Activated CD4-positive, alpha-beta T cell treated with anti-CD3 and anti-CD28 coated beads for 36 hours (primary cell): ENCODE measurements at regions of chr6 and their contacts with region 1.

Region 1: DNA sequence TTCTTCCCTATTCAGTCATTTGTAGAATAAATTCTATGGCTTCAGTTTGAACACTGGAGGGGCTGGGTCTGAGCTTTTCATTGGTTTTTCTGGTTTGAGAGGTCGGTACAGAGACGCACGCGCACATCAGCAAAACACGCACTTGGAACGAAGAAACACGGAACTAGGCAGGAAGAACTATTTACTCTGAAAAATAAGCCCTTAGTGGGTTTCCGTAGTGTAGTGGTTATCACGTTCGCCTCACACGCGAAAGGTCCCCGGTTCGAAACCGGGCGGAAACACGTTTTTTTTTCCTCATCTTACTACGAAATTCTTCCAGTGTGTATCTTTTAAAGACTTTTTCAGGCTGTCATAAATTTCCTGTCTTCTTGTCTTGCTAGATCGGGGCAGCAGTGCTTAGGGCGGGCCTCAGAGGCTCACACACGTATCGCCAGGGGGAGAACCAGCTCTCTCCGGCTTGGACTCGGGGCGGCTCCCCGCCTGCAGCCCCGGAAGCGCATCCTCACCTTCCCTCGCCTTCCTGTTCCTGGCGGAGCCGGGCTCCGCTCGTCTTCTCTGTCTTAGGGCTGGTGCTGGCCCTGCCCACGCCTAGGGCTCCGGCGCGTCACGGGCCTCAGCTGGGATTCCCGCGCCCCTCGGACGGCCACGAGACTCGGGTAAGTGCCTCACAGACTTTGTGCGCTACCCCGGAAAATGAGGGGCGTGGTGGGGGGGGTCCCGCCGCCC is at the start of gene HMGN4:
- DNase-seq: peak; percentile 89
- ATAC-seq: peak; percentile 63
- H3K4me3 Mint-ChIP-seq: peak within 1 kb of the TSS; percentile 89
- H3K27ac Mint-ChIP-seq: peak within 1 kb of the TSS; percentile 99
- H3K4me1 Mint-ChIP-seq: peaks cover 57% of the 10 kb centered on the region
- H3K27me3 Mint-ChIP-seq: no peaks in the 10 kb centered on the region
- total RNA-seq, gene HMGN4: 63.6 to 86.4 TPM

Region 2: GRCh38 chr6:26097268-26097875 is 440.6 kb before region 1 on chr6:
- CTCF ChIA-PET with region 1: no interaction called
- POLR2A ChIA-PET with region 1: no interaction called
- intact Hi-C with region 1: no loop called
- DNase-seq: peak; percentile 74
- ATAC-seq: peak; percentile 88
- H3K4me3 Mint-ChIP-seq: no peak overlapping the region
- H3K27ac Mint-ChIP-seq: no peak overlapping the region
- H3K4me1 Mint-ChIP-seq: peaks cover 2% of the 10 kb centered on the region
- H3K27me3 Mint-ChIP-seq: no peaks in the 10 kb centered on the region

Region 3: GRCh38 chr6:26322645-26323482 is 215.1 kb before region 1 on chr6:
- CTCF ChIA-PET with region 1: interaction called, 4 read pairs
- POLR2A ChIA-PET with region 1: interaction called, 3 read pairs
- intact Hi-C with region 1: loop called in 1 of 2 experiments (anchors 1 kb)
- DNase-seq: peak; percentile 77
- ATAC-seq: peak; percentile 66
- H3K4me3 Mint-ChIP-seq: peak overlapping the region; percentile 84
- H3K27ac Mint-ChIP-seq: peak overlapping the region; percentile 93
- H3K4me1 Mint-ChIP-seq: peaks cover 28% of the 10 kb centered on the region
- H3K27me3 Mint-ChIP-seq: peaks cover 5% of the 10 kb centered on the region

Region 4: GRCh38 chr6:26366504-26366903 is 171.5 kb before region 1 on chr6:
- CTCF ChIA-PET with region 1: no interaction called
- POLR2A ChIA-PET with region 1: no interaction called
- intact Hi-C with region 1: loop called in 1 of 2 experiments (anchors 1 kb)
- DNase-seq: no peak
- ATAC-seq: no peak
- H3K4me3 Mint-ChIP-seq: no peak overlapping the region
- H3K27ac Mint-ChIP-seq: peak overlapping the region; percentile 61
- H3K4me1 Mint-ChIP-seq: peaks cover 58% of the 10 kb centered on the region
- H3K27me3 Mint-ChIP-seq: no peaks in the 10 kb centered on the region

Region 5: GRCh38 chr6:26520853-26521599 is 17.0 kb before region 1 on chr6:
- CTCF ChIA-PET with region 1: interaction called, 5 read pairs
- POLR2A ChIA-PET with region 1: interaction called, 6 read pairs
- intact Hi-C with region 1: loop called (anchors 1 to 2 kb)
- DNase-seq: peak; percentile 89
- ATAC-seq: peak; percentile 73
- H3K4me3 Mint-ChIP-seq: peak overlapping the region; percentile 85
- H3K27ac Mint-ChIP-seq: peak overlapping the region; percentile 94
- H3K4me1 Mint-ChIP-seq: peaks cover 24% of the 10 kb centered on the region
- H3K27me3 Mint-ChIP-seq: no peaks in the 10 kb centered on the region

Region 6: GRCh38 chr6:26596579-26597388 is 58.8 kb after region 1 on chr6 and contains the start of gene ABT1:
- CTCF ChIA-PET with region 1: interaction called, 8 read pairs
- POLR2A ChIA-PET with region 1: no interaction called
- intact Hi-C with region 1: loop called (anchors 1 to 2 kb)
- DNase-seq: peak; percentile 98
- ATAC-seq: peak; percentile 66
- H3K4me3 Mint-ChIP-seq: no peak within 1 kb of the TSS
- H3K27ac Mint-ChIP-seq: no peak within 1 kb of the TSS
- H3K4me1 Mint-ChIP-seq: peaks cover 41% of the 10 kb centered on the region
- H3K27me3 Mint-ChIP-seq: peaks cover 18% of the 10 kb centered on the region
- total RNA-seq, gene ABT1: 21.5 to 24.9 TPM